SK-N-SH (cell line): ENCODE measurements at regions of chr11 and their contacts with region 1.

Region 1: DNA sequence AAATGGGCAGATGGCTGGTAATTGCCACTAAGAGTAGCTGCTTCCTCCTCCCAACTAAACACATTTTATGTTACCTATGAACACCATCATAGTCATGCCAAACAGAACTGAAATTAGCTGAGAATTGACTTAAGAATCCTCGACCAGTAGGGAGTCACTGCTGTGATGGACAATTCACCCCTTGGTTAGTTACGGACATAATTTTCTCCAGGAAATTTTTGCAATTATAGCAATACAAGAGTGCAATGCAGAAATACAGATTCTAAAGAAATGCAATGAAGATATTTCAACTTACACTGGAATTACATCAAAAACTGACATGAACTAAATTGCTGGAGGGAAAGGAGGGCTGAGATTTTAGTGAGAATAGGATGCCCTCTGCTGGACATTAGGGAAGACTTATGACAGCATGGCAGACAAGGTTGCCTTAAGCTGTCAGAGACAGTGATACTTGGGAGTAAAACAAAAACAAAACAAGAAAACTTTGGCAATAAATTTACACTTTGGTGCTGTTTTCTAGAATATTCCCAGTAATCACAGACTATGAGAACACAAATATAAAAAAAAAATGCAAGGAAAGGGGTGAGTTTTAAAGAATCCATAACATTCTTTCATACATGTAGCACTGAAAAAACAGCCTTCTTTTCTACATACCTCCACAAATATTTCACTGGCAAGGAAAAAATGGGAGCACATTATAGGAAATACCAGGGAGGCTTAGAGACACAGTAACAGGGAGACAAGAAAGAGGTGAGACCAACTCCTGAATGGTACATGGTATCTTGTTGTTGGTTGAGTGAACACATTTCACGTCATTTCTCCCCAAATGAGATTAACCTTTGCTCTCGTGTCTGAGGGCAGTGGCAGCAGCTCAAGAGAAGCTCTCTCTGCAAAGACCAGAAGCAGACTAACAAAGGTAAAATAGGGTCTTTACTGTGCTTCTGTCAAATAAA is 11.2 kb upstream of the PPP2R1B start:
- DNase-seq: peak; percentile 60
- H3K4me3 ChIP-seq: peak overlapping the region in 1 of 2 experiments; percentile 16; a peak in 1 of 4 replicates
- H3K27ac ChIP-seq: peak overlapping the region in 1 of 2 experiments; percentile 5; a peak in 1 of 4 replicates
- H3K4me1 ChIP-seq: peaks cover 5 to 7% of the 10 kb centered on the region in 2 experiments; a peak in 3 of 4 replicates
- H3K27me3 ChIP-seq: no peaks in the 10 kb centered on the region
- CTCF ChIP-seq: peak; percentile 82
- EP300 ChIP-seq: no peak
- RAD21 ChIP-seq: peak; percentile 97

Region 2: GRCh38 chr11:111565114-111565720 is 212.2 kb before region 1 on chr11:
- CTCF ChIA-PET with region 1: interaction called, 21 read pairs
- POLR2A ChIA-PET with region 1: no interaction called
- DNase-seq: peak; percentile 48
- H3K4me3 ChIP-seq: no peak overlapping the region; a peak in 1 of 4 replicates
- H3K27ac ChIP-seq: peak overlapping the region in 1 of 2 experiments; percentile 56; a peak in 2 of 4 replicates
- H3K4me1 ChIP-seq: peaks cover 11 to 22% of the 10 kb centered on the region in 2 experiments; a peak in 3 of 4 replicates
- H3K27me3 ChIP-seq: no peaks in the 10 kb centered on the region
- CTCF ChIP-seq: peak; percentile 89
- EP300 ChIP-seq: no peak
- RAD21 ChIP-seq: peak; percentile 89

Region 3: GRCh38 chr11:111601979-111602864 is 175.1 kb before region 1 on chr11 and contains the start of gene SIK2:
- CTCF ChIA-PET with region 1: interaction called, 184 read pairs
- POLR2A ChIA-PET with region 1: no interaction called
- DNase-seq: peak; percentile 98
- H3K4me3 ChIP-seq: peak within 1 kb of the TSS; percentile 82 to 95
- H3K27ac ChIP-seq: peak within 1 kb of the TSS; percentile 74 to 90
- H3K4me1 ChIP-seq: peaks cover 12 to 13% of the 10 kb centered on the region in 2 experiments; a peak in 3 of 4 replicates
- H3K27me3 ChIP-seq: no peaks in the 10 kb centered on the region
- CTCF ChIP-seq: peak; percentile 79
- EP300 ChIP-seq: peak; percentile 17 to 41; a peak in 3 of 4 replicates
- RAD21 ChIP-seq: peak; percentile 98
- polyA plus RNA-seq, gene SIK2: 8.9 and 9.7 TPM in 2 replicates

Region 4: DNA sequence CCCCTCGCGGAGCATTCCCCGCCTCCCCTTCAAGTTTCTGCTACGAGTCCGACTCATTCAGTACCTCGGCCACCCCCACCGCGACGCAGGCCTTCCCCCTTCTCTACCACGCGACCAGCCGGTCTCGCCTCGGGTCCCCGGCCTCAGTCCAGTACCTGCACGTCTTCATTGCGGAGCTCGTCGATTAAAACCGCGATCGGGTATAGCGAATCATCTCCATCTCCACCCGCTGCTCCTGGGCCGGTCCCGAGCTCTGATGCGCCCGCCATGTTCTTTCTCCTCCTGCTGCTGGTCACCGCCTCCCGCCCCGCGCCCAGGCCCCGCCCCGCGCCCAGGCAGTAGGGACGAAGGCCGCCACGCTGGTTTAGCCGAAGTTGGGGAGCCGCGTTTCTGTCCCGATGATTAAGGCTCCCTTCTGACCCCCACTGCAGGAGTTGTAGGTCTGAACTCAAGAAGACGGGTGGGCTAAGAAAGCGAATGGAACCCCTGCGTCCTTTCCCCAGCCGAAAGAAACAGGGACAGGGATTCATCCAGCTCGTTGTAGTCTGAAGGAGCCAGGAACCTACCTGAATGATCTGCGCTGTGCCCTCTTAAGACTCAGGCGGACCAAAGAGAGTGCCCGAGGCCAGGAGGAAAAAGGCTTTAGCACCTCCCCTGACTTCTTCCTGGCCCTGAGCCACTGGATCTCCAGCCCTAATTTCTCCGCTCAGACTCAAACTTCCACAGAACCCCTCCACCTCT is 11.1 kb before region 1 on chr11 and contains the start of gene PPP2R1B:
- CTCF ChIA-PET with region 1: interaction called, 61 read pairs
- POLR2A ChIA-PET with region 1: no interaction called
- DNase-seq: peak; percentile 98
- H3K4me3 ChIP-seq: peak within 1 kb of the TSS; percentile 76 to 85
- H3K27ac ChIP-seq: peak within 1 kb of the TSS; percentile 81 to 86
- H3K4me1 ChIP-seq: peaks cover 5% of the 10 kb centered on the region in 2 experiments; a peak in 2 of 4 replicates
- H3K27me3 ChIP-seq: no peaks in the 10 kb centered on the region
- CTCF ChIP-seq: no peak
- EP300 ChIP-seq: no peak
- RAD21 ChIP-seq: no peak
- polyA plus RNA-seq, gene PPP2R1B: 25.9 and 32.3 TPM in 2 replicates

Region 5: DNA sequence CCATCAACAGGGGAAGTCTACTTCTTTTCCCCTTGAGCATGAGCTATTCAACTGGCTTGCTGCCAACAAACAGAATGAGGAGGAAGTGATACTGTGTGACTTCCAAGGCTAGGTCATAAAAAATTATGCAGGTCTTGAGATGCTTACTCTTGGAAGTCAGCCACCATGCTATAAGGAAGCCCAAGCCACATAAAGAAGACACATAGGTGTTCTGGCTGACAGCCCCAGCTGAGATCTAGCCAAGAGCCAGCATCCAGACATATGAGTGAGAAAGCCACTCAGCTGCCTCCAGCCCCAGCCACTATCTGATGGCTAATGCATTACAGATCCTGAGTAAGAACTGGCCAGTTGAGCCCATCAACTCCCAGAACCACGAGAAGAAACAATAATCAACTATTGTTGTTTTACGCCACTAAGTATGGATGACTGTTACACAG is 19.8 kb after region 1 on chr11:
- CTCF ChIA-PET with region 1: interaction called, 13 read pairs
- POLR2A ChIA-PET with region 1: no interaction called
- DNase-seq: no peak
- H3K4me3 ChIP-seq: no peak overlapping the region
- H3K27ac ChIP-seq: peak overlapping the region; percentile 28 to 35; a peak in 3 of 4 replicates
- H3K4me1 ChIP-seq: peaks cover 18 to 26% of the 10 kb centered on the region in 2 experiments; a peak in 3 of 4 replicates
- H3K27me3 ChIP-seq: no peaks in the 10 kb centered on the region
- CTCF ChIP-seq: no peak
- EP300 ChIP-seq: no peak
- RAD21 ChIP-seq: no peak

Region 6: GRCh38 chr11:111833524-111833923 is 56.2 kb after region 1 on chr11:
- CTCF ChIA-PET with region 1: interaction called, 101 read pairs
- POLR2A ChIA-PET with region 1: no interaction called
- DNase-seq: no peak
- H3K4me3 ChIP-seq: no peak overlapping the region
- H3K27ac ChIP-seq: no peak overlapping the region; a peak in 1 of 4 replicates
- H3K4me1 ChIP-seq: peaks cover 6 to 13% of the 10 kb centered on the region in 2 experiments; a peak in 3 of 4 replicates
- H3K27me3 ChIP-seq: no peaks in the 10 kb centered on the region
- CTCF ChIP-seq: peak; percentile 33
- EP300 ChIP-seq: no peak
- RAD21 ChIP-seq: peak; percentile 70